Endothelial cell of umbilical vein (primary cell): ENCODE measurements at regions of chr4 and their contacts with region 1.

Region 1: GRCh38 chr4:84966383-84967242 is at the start of gene WDFY3:
- DNase-seq: peak; percentile 85
- H3K4me3 ChIP-seq: peak within 1 kb of the TSS; percentile 65 to 95 (median 78)
- H3K27ac ChIP-seq: peak within 1 kb of the TSS; percentile 40
- H3K4me1 ChIP-seq: peaks cover 7% of the 10 kb centered on the region
- H3K27me3 ChIP-seq: no peaks in the 10 kb centered on the region
- CTCF ChIP-seq: peak in 1 of 2 donors; percentile 10
- POLR2A ChIP-seq: peak; percentile 88
- total RNA-seq, gene WDFY3: 89.7 and 113 TPM in 2 replicates

Region 2: DNA sequence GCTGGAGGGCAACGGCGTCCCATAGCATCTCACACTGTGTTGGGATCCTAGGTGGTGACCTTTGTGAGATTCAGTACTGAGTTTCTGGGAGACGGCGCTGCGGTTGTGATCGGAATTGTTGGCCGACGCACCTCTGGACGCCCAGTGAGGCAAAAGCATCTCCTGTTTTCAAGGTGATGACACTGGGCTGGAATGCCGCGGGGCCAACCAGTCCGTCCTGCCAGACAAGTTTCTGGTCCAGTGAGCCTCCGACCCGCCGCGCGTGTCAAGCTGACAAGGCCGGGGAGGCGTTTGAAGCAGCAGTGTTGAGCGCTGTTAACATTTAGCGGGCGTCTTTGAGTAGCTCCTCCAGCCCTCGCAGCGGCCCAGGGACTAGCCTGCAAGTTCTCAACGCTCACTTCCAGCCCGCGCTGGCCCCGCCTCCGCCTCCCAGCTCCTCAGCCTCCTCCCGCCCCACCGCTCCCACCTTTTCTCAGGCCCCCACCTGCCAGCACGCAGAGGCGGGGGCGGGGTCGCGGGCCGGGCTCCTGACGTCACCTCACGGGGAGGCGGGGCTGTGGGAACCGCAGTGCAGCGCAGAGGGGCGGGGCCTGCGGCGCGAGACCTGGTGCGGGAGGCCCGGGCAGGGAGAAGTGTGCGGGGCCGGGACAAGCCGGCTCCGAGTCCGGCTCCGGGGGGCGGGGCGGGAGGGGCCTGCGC is 384.2 kb before region 1 on chr4:
- CTCF ChIA-PET with region 1: interaction called, 49 read pairs
- POLR2A ChIA-PET with region 1: no interaction called
- dilution Hi-C with region 1: no loop called
- intact Hi-C with region 1: loop called (anchors 1 kb)
- DNase-seq: peak; percentile 50
- H3K4me3 ChIP-seq: peak overlapping the region; percentile 32 to 52 (median 36)
- H3K27ac ChIP-seq: no peak overlapping the region
- H3K4me1 ChIP-seq: peaks cover 13% of the 10 kb centered on the region
- H3K27me3 ChIP-seq: peaks cover 50 to 67% of the 10 kb centered on the region in 2 experiments
- CTCF ChIP-seq: no peak
- POLR2A ChIP-seq: no peak

Region 3: DNA sequence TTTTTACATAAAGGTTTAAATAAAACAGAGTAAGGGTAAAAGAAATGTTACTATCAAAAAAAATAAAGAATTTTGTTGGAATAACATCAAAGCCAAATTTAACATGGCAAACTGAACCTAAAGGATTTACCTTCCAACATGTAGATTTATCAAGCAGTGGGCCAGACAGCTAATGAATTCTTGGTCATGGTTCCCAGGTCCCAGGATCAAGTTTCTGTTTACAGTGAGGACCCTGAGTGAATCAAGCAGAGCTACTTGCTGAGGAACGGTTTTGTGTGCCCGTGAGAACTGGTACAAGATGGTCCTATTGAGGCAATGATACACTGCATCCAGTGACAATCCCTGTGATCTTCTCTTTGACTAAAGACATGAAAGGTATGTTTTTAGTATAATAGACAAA is 226.6 kb before region 1 on chr4:
- CTCF ChIA-PET with region 1: interaction called, 10 read pairs
- POLR2A ChIA-PET with region 1: no interaction called
- dilution Hi-C with region 1: no loop called
- intact Hi-C with region 1: no loop called
- DNase-seq: no peak
- H3K4me3 ChIP-seq: no peak overlapping the region
- H3K27ac ChIP-seq: no peak overlapping the region
- H3K4me1 ChIP-seq: no peaks in the 10 kb centered on the region
- H3K27me3 ChIP-seq: no peaks in the 10 kb centered on the region
- CTCF ChIP-seq: no peak
- POLR2A ChIP-seq: no peak

Region 4: DNA sequence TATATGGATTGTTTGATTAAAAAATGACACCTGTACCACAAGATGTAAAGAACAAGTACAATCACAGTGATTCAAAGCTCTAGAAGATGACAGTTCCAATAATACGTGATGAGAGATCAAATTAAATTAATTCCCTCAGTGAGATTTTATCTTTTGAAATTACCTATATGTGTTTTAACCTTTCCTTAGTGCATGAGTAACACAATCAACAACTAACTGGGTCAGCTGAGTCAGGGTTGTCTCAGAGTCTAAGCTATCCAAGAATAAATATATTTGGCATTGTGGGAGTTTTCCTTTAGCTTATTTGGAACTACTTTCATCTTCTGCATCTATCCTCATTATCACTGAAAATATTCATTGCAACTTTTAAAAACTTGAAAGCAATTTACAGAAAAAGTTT is 162.9 kb before region 1 on chr4:
- CTCF ChIA-PET with region 1: interaction called, 8 read pairs
- POLR2A ChIA-PET with region 1: no interaction called
- dilution Hi-C with region 1: no loop called
- intact Hi-C with region 1: loop called (anchors 1 kb)
- DNase-seq: peak; percentile 49
- H3K4me3 ChIP-seq: no peak overlapping the region
- H3K27ac ChIP-seq: peak overlapping the region; percentile 38
- H3K4me1 ChIP-seq: peaks cover 47% of the 10 kb centered on the region
- H3K27me3 ChIP-seq: no peaks in the 10 kb centered on the region
- CTCF ChIP-seq: no peak
- POLR2A ChIP-seq: no peak

Region 5: DNA sequence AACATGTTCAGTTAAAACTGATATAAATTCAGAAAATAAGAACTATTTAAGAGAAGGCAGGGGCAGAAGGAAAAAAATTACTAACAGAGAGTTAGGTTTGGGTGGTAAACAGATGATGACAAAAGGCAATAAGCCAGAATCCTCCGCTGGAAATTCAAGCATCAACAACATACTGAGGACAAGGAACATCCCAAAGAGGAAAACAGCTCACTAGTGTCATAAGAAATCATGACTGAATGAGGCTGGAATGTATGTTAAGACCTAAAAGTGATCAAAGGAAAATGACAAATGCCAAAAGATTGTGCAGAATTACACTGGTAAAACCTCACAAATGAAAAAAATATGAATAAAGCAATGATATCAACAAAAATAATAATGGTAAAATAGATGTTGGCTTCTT is 88.5 kb before region 1 on chr4:
- CTCF ChIA-PET with region 1: interaction called, 3 read pairs
- POLR2A ChIA-PET with region 1: no interaction called
- dilution Hi-C with region 1: no loop called
- intact Hi-C with region 1: loop called (anchors 1 kb)
- DNase-seq: peak; percentile 70
- H3K4me3 ChIP-seq: no peak overlapping the region
- H3K27ac ChIP-seq: peak overlapping the region; percentile 88
- H3K4me1 ChIP-seq: peaks cover 35% of the 10 kb centered on the region
- H3K27me3 ChIP-seq: no peaks in the 10 kb centered on the region
- CTCF ChIP-seq: no peak
- POLR2A ChIP-seq: no peak

Region 6: DNA sequence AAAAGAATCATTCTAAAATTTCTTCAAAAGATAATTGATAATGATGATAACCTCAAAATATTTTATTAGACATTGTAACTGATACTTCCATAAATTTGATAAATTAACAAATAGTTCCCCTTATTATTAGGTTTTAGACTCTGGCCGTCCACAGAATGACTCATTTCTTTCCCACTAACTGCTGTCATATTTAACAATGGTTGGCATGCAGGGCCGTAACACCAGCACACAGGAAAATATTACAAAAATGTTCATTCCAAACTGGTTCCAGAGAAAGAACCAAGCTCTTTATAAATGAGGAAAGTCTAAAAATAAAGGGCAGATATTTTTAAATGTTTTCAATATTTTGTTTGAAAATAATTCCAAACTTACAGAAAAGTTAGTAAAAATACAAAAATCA is 28.3 kb before region 1 on chr4:
- CTCF ChIA-PET with region 1: interaction called, 5 read pairs
- POLR2A ChIA-PET with region 1: interaction called, 4 read pairs
- dilution Hi-C with region 1: no loop called
- intact Hi-C with region 1: loop called (anchors 1 kb)
- DNase-seq: peak; percentile 85
- H3K4me3 ChIP-seq: peak overlapping the region in 1 of 3 experiments; percentile 37
- H3K27ac ChIP-seq: peak overlapping the region; percentile 53
- H3K4me1 ChIP-seq: peaks cover 28% of the 10 kb centered on the region
- H3K27me3 ChIP-seq: no peaks in the 10 kb centered on the region
- CTCF ChIP-seq: no peak
- POLR2A ChIP-seq: no peak

Region 7: DNA sequence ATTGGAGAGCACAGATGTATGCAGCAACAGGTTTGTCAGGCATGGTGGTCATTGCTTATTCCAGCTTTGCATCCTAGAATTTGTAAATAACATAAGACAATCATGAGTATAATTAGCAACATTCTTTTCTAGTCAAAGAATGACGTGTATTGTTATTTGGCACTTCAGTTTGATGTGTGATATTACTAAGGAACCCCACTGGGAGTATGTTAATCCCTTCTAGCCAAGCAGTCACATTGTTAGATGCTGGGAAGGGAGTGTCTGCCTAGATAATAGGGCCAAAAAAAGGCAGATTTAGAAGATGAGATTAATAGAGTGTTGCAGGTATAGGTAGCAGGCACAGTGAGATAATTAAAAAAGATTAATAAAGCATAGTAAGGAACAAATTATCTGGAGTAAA is 159.1 kb after region 1 on chr4:
- CTCF ChIA-PET with region 1: no interaction called
- POLR2A ChIA-PET with region 1: no interaction called
- dilution Hi-C with region 1: no loop called
- intact Hi-C with region 1: no loop called
- DNase-seq: no peak
- H3K4me3 ChIP-seq: no peak overlapping the region
- H3K27ac ChIP-seq: no peak overlapping the region
- H3K4me1 ChIP-seq: no peaks in the 10 kb centered on the region
- H3K27me3 ChIP-seq: peaks cover 0 to 7% of the 10 kb centered on the region in 2 experiments
- CTCF ChIP-seq: no peak
- POLR2A ChIP-seq: no peak